H1 (cell line): ENCODE measurements at regions of chr4 and their contacts with region 1.

Region 1: GRCh38 chr4:128427832-128428366 is 140.3 kb upstream of the PGRMC2 start:
- DNase-seq: no peak
- H3K4me3 ChIP-seq: no peak overlapping the region
- H3K27ac ChIP-seq: no peak overlapping the region
- H3K4me1 ChIP-seq: no peaks in the 10 kb centered on the region
- H3K27me3 ChIP-seq: peaks cover 0 to 2% (median 0%) of the 10 kb centered on the region in 4 experiments; a peak in 1 of 7 replicates
- CTCF ChIP-seq: peak in 2 of 3 experiments; percentile 4 to 12; a peak in 2 of 4 replicates
- EP300 ChIP-seq: no peak
- POLR2A ChIP-seq: no peak
- RAD21 ChIP-seq: peak; percentile 34 to 43; a peak in 3 of 4 replicates

Region 2: DNA sequence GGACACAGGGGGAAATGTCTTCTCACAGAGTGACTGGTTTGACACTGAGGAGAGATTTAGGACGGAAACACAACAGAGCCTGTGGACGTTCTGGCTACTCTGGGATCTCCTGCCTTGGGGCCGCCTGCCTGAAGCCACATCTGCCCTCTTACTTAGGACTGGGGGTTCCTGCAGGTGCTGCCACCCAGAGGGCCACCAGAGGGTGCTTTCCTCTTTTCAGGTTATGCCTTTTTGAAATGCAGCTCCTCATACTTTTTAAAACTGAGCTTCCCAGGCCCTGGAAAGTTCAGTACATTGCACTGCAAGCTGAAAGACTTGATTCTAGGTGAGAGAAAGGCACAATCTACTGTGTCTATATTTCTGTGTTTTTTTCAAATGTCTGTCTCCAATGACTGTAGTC is 48.0 kb before region 1 on chr4:
- CTCF ChIA-PET with region 1: interaction called, 10 read pairs
- POLR2A ChIA-PET with region 1: no interaction called
- DNase-seq: peak in 1 of 2 experiments; percentile 64
- H3K4me3 ChIP-seq: no peak overlapping the region
- H3K27ac ChIP-seq: no peak overlapping the region
- H3K4me1 ChIP-seq: peaks cover 0 to 3% (median 0%) of the 10 kb centered on the region in 4 experiments; a peak in 4 of 7 replicates
- H3K27me3 ChIP-seq: no peaks in the 10 kb centered on the region; a peak in 1 of 7 replicates
- CTCF ChIP-seq: peak; percentile 52 to 71 (median 62)
- EP300 ChIP-seq: no peak
- POLR2A ChIP-seq: no peak
- RAD21 ChIP-seq: peak; percentile 53 to 62

Region 3: GRCh38 chr4:128461291-128462102 is 33.6 kb after region 1 on chr4:
- CTCF ChIA-PET with region 1: no interaction called
- POLR2A ChIA-PET with region 1: no interaction called
- DNase-seq: no peak
- H3K4me3 ChIP-seq: no peak overlapping the region
- H3K27ac ChIP-seq: no peak overlapping the region
- H3K4me1 ChIP-seq: peaks cover 0 to 6% (median 4%) of the 10 kb centered on the region in 4 experiments; a peak in 4 of 7 replicates
- H3K27me3 ChIP-seq: no peaks in the 10 kb centered on the region; a peak in 1 of 7 replicates
- CTCF ChIP-seq: no peak
- EP300 ChIP-seq: no peak
- POLR2A ChIP-seq: no peak
- RAD21 ChIP-seq: no peak

Region 4: GRCh38 chr4:128517739-128518510 is 90.0 kb after region 1 on chr4:
- CTCF ChIA-PET with region 1: no interaction called
- POLR2A ChIA-PET with region 1: no interaction called
- DNase-seq: no peak
- H3K4me3 ChIP-seq: no peak overlapping the region
- H3K27ac ChIP-seq: no peak overlapping the region
- H3K4me1 ChIP-seq: peaks cover under 1 to 12% (median 4%) of the 10 kb centered on the region in 4 experiments; a peak in 3 of 7 replicates
- H3K27me3 ChIP-seq: no peaks in the 10 kb centered on the region
- CTCF ChIP-seq: no peak
- EP300 ChIP-seq: no peak
- POLR2A ChIP-seq: no peak
- RAD21 ChIP-seq: no peak